HEK293 (cell line): ENCODE measurements at regions of chr1 and their contacts with region 1.

Region 1: GRCh38 chr1:151594143-151594625 is 17.7 kb upstream of the SNX27 start:
- H3K4me3 ChIP-seq: no peak overlapping the region
- H3K27ac ChIP-seq: peak overlapping the region; percentile 8; the same call in 1 of the 2 replicates
- H3K4me1 ChIP-seq: peaks cover 11% of the 10 kb centered on the region
- CTCF ChIP-seq: peak; percentile 69; the same call in 1 of the 2 replicates

Region 2: DNA sequence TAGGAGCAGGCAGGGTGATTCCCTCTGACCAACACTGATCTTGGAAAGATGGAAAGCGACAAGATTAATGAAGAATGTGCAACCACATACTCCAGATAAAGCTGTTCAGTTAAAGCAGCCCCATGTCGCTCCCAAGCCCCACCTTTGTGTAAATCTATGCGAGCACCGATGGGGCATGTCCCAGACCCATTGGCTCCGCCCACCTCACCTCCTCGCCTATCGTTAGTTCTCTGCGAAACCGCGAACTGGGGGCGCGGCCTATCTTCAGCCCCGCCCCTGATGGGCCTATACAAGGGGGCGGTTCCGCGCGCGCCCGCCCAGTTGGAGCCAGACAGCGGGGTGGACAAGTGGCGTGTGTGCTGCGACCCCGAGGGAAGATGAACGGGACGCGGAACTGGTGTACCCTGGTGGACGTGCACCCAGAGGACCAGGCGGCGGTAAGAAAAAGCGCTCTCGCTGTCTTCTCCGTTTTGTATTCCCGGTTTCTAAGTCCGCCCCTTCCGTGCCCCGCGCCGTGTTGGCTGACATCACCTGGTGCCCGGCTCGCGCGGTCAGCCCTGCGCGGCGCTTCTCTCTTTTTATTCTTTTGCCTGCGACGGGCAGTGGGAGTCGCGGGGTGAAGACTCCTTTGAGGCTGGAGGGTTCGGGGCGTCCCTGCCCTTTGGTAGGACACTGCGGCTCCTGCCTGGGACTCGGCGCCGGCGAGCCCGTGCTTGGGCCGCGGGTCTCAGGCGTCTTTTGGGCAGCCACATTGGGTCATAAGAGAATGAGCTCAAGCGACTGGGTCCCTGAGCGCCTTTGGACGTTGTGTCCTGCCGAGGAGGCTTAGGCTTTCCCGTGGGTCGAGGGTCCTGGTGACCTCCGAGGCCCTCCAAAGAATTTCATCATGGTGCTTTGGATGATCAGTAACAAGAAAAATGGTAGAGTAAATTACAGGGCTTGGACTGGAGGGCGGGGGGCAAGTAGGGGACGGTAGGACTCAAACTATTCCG is 53.9 kb before region 1 on chr1 and contains the start of gene TUFT1:
- CTCF ChIA-PET with region 1: interaction called, 20 read pairs
- POLR2A ChIA-PET with region 1: interaction called, 9 read pairs
- H3K4me3 ChIP-seq: peak within 1 kb of the TSS; percentile 84
- H3K27ac ChIP-seq: peak within 1 kb of the TSS; percentile 74
- H3K4me1 ChIP-seq: peaks cover 12% of the 10 kb centered on the region; the same call in 1 of the 2 replicates
- CTCF ChIP-seq: peak; percentile 49; the same call in 1 of the 2 replicates

Region 3: GRCh38 chr1:151604291-151604690 is 10.1 kb after region 1 on chr1:
- CTCF ChIA-PET with region 1: interaction called, 15 read pairs
- POLR2A ChIA-PET with region 1: interaction called, 4 read pairs
- H3K4me3 ChIP-seq: no peak overlapping the region
- H3K27ac ChIP-seq: no peak overlapping the region
- H3K4me1 ChIP-seq: peaks cover 2% of the 10 kb centered on the region; the same call in 1 of the 2 replicates
- CTCF ChIP-seq: no peak

Region 4: DNA sequence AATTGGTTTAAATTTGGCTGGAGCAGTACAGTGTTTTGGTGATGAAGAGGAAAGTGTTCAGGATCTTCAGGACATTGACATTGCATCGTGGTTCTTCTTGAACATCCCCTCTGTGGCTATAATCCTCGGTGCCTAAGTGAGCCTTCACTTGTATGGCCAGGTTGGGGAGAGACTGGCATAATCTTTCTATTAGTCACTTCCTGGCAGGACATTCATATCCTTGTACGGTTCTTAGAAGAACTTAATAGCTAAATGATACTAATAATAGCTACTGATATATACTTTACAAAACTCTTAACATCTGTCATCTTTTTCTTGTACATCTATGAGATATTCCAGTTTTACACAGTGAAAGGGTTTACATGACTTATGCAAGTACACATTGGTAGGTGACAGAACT is 86.6 kb after region 1 on chr1:
- CTCF ChIA-PET with region 1: interaction called, 10 read pairs
- POLR2A ChIA-PET with region 1: no interaction called
- H3K4me3 ChIP-seq: no peak overlapping the region
- H3K27ac ChIP-seq: no peak overlapping the region
- H3K4me1 ChIP-seq: no peaks in the 10 kb centered on the region
- CTCF ChIP-seq: no peak

Region 5: DNA sequence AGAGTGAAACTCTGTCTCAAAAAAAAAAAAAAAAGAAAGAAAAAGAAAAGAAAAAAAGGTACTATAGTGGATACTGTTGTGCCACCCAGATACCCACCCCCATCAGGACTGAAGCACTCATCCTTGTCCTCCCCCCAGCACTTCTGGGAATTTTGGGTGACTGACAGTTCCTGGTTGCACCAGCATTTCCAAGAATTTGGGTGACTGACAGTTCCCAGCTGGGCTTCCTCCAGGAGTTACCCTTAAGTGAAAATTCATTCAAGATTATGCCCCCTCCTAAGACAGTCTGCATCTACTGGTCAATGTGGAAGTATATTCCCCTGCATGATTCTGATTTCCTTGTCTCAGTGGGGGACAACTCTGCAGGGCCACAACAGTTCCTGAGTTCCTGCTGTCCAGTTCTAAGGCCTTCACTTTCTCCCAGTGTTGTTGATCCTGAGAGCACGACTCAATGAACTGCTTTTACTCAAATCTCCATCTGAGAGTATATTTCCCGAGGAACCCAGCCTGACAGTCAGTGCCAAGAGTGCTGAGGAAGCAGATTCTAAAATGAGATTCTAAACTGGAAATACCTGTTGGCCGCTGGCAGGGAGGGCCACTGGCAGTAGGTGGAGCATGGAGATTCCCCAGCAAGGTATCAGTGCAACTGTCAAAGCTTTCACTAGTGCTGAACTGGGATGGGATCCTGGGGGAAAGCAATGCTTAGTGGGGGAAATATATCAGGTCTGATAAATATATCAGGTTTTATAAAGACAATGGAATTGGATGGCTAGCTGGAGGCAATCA is 145.6 kb after region 1 on chr1:
- CTCF ChIA-PET with region 1: interaction called, 34 read pairs
- POLR2A ChIA-PET with region 1: no interaction called
- H3K4me3 ChIP-seq: no peak overlapping the region
- H3K27ac ChIP-seq: no peak overlapping the region
- H3K4me1 ChIP-seq: no peaks in the 10 kb centered on the region
- CTCF ChIP-seq: no peak